HEK293 (cell line): ENCODE measurements at regions of chr1 and their contacts with region 1.

Region 1: DNA sequence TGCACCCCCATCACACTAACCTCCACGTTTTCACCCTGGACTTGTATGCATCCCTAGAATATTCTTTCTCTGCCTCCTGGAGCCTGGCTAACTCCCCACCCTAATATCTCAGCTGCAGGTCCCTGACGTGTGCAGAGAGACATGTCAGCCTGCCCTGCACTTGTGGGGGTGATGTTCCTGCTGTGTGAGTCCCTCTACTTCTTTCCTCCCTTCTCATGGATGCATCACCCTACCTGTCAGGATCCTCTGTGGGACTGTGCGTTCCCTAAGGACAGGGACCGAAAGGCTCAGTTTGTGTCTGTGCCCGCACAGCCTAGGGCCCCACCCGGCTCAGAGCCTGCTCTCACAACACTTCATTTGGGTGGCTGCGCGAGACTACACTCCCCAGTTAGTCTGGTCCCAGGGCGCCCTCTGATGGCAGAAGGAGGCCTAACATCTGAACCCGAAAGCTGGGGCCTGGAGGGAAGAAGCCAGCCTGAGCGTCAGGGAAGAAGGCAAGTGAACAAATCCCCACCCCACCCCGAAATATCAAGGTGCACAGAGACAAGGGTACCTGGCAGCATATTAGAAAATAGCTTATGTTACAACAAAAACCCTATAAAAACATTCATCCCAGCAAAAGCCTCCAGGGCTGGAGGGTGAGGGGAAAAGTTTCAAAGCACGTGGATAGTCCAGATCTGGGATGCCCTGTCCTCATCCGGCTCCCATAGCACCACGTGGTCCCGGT is 3.7 kb downstream of the CD52 start:
- H3K4me3 ChIP-seq: no peak overlapping the region
- H3K27ac ChIP-seq: no peak overlapping the region
- H3K4me1 ChIP-seq: no peaks in the 10 kb centered on the region
- CTCF ChIP-seq: peak; percentile 85

Region 2: GRCh38 chr1:26097696-26098095 is 223.8 kb before region 1 on chr1:
- CTCF ChIA-PET with region 1: interaction called, 15 read pairs
- POLR2A ChIA-PET with region 1: no interaction called
- H3K4me3 ChIP-seq: no peak overlapping the region
- H3K27ac ChIP-seq: no peak overlapping the region
- H3K4me1 ChIP-seq: no peaks in the 10 kb centered on the region
- CTCF ChIP-seq: no peak

Region 3: DNA sequence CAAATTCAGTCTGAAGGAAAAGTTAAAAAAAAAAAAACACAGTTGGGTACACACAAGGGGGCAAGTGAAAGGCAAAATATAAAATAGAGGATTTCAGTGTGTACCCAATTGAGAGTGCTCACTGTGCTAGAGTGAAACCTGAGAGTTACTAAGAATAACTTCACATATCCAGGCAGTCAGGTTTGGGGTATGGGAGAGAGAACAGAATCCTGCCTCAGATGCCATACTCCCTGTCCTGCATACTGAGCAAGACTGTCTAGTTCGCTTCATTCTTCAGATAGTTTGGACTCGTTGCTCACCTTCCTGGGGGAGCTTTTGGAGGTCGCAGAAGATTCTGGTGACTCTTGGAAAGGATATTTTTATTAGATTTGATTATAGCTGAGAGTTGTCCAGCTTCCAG is 67.1 kb before region 1 on chr1:
- CTCF ChIA-PET with region 1: no interaction called
- POLR2A ChIA-PET with region 1: no interaction called
- H3K4me3 ChIP-seq: no peak overlapping the region
- H3K27ac ChIP-seq: no peak overlapping the region
- H3K4me1 ChIP-seq: no peaks in the 10 kb centered on the region
- CTCF ChIP-seq: no peak

Region 4: DNA sequence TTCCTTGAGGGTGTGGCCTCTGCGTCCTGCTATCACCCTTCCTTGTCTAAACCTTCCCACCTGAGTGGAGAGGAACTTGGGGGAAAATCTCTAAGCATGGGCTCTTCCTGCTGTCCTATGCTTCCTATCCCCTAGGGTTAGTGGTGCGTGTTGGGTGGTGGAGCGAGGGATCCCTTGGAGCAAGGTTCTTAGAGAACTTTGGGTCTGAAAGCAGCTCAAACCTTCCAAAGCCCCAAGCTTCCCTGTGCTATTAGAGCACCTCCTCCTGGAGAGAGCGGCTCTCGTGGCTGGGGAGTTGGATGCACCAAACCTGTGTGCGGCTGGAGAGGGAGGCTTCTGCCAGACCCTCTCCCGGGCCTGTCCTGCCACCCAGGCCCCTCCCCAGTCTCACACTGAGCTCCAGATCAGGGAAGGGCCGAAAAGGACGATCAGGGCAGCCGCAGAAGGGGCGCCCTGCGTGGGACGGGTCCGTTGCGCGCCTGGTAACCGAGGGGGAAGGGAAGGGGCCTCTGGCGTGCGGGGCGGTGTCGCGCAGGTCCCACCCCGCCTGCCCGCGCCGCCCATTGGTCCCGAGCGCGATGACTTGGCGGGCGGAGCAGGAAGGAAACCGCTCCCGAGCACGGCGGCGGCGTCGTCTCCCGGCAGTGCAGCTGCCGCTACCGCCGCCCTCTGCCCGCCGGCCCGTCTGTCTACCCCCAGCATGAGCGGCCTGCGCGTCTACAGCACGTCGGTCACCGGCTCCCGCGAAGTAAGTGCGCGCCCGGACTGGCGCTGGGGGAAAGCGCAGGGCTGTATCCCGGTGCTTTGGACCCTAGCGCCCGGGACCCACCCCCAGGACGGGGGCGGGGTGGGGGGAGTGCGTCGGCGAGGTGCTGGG is 41.8 kb before region 1 on chr1 and contains the start of gene SH3BGRL3:
- CTCF ChIA-PET with region 1: interaction called, 203 read pairs
- POLR2A ChIA-PET with region 1: interaction called, 10 read pairs
- H3K4me3 ChIP-seq: peak within 1 kb of the TSS; percentile 63
- H3K27ac ChIP-seq: 0 out of 2 replicates have a peak within 1 kb of the TSS, but pooled peaks have one; percentile 7
- H3K4me1 ChIP-seq: 0 out of 2 replicates have a peak, but pooled peaks cover 3% of the 10 kb centered on the region
- CTCF ChIP-seq: peak; percentile 92

Region 5: DNA sequence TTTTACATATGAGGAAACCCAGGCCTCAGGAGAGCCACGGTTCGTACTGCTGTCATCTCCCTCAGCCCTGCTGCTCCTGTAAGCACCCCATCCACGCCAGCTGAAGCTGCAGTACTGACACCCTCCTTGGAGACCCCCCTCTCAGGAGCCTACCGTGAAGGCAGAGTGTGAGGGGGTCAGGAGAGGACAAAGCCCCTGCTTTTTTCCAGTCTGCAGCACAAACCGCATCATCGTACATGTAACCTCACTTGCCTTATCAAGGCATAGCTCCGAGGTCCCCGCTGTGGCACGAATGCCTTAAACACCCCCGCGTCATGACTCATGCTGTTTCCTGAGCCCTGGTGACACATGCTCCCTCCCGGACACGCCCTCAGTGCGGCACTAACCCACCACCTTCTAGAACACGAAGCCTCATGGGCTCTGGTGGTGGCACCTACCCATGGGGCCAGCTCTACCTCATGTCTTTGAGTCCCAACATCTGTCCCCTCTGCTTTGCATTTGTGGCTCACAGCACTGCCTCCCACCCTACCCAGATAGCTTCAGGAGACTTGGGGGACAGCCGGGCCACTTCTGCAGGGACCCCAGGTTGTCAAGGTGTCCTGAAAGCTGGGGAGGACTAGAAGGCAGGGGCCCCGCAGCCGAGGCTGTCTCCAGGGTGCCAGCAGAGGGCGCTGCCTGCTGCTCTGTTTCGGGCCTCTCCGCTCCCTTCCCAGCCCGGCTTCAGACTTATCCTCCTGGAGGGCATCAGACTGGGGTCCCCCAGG is 36.7 kb before region 1 on chr1:
- CTCF ChIA-PET with region 1: interaction called, 203 read pairs
- POLR2A ChIA-PET with region 1: interaction called, 10 read pairs
- H3K4me3 ChIP-seq: no peak overlapping the region
- H3K27ac ChIP-seq: no peak overlapping the region
- H3K4me1 ChIP-seq: no peaks in the 10 kb centered on the region
- CTCF ChIP-seq: peak; percentile 70

Region 6: DNA sequence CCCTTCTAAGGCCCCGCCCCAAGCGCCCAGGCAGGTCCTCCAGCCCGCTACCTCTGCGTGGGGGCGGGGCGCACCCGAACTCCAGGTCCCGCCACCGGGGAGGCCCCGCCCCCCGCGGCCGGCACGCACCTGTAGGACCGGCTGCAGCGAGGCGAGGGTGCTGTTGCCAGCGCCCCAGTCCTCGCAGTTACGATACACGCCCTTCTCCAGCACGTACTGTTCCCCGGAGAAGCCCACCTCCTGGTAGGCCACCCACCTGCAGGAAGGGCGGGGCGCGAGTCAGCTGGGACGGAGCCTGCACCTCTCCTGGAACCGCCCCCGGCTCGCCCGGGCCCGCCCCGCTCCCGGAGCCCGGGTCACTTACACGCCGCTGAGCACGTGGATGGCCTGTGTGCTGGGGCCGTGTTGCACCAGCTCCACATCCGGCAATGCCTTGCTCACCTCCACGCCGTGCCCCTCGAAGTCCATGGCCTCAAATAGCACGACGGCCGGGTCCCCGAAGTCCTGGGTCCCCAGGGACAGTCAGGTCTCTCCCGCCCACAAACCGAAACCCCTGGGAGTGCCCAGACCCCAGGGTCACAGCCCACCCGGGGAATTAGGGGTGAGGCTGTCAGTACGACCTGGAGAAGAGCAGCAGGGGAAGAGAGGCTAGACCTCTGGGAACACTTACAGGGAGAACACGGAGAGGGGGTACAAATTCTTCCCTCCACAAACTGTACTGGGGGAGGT is 15.2 kb after region 1 on chr1:
- CTCF ChIA-PET with region 1: interaction called, 23 read pairs
- POLR2A ChIA-PET with region 1: no interaction called
- H3K4me3 ChIP-seq: peak overlapping the region; percentile 76
- H3K27ac ChIP-seq: no peak overlapping the region; the same call in 1 of the 2 replicates
- H3K4me1 ChIP-seq: no peaks in the 10 kb centered on the region
- CTCF ChIP-seq: no peak

Region 7: DNA sequence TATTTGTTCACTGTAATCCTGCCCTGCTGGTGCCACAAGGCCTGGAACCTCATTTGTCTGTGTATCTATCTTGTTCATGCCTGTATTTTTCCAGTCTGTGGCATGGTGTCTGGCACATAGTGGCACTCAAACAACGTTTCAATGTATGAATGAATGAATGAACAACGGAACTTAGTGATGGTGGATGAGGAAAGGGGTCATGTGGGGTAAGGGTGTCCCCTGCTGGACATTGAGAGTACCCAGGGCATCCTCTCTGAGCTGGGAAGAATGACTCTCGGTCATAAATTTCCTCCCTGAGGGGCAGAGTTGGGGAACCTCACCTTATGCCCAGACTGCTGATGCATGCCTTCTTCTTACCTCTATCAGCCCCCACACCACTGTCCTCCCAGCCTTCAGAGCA is 70.0 kb after region 1 on chr1:
- CTCF ChIA-PET with region 1: interaction called, 16 read pairs
- POLR2A ChIA-PET with region 1: no interaction called
- H3K4me3 ChIP-seq: no peak overlapping the region
- H3K27ac ChIP-seq: no peak overlapping the region
- H3K4me1 ChIP-seq: no peaks in the 10 kb centered on the region
- CTCF ChIP-seq: peak; percentile 70